Activated CD4-positive, alpha-beta T cell treated with anti-CD3 and anti-CD28 coated beads, Interleukin-2, amount 10 ng/mL, durations not matched to agents 24 days and 14 days (primary cell): ENCODE measurements at regions of chr17 and their contacts with region 1.

Region 1: DNA sequence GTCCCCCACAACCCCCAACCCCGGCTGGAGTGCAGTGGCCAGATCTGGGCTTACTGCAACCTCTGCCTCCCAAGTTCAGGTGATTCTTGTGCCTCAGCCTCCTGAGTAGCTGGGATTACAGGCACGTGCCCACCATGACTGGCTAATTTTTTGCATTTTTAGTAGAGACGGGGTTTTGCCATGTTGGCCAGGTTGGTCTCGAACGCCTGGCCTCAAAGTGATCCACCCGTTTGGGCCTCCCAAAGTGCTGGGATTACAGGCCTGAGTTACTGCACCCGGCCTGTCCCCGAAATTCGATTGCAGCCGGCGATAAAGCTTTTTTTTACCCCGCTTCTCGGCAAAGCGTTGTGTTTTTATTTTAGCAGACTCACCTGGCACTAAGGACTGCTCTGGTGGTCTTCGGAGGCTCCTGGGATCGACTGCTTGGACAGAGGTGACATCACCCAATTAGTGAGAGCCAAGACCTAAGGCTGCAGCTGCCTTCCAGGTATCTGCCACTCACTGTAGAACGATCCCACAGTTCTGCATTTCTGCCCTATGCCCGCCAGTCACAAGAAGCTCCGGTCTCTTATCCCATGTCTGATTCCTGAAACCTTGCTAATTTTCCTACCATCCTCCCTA is 82.2 kb upstream of the ARL4D start:
- DNase-seq: peak; percentile 79
- H3K4me3 Mint-ChIP-seq: peak overlapping the region; percentile 15
- H3K27ac Mint-ChIP-seq: no peak overlapping the region
- H3K4me1 Mint-ChIP-seq: peaks cover 20% of the 10 kb centered on the region
- H3K27me3 Mint-ChIP-seq: peaks cover 2% of the 10 kb centered on the region

Region 2: DNA sequence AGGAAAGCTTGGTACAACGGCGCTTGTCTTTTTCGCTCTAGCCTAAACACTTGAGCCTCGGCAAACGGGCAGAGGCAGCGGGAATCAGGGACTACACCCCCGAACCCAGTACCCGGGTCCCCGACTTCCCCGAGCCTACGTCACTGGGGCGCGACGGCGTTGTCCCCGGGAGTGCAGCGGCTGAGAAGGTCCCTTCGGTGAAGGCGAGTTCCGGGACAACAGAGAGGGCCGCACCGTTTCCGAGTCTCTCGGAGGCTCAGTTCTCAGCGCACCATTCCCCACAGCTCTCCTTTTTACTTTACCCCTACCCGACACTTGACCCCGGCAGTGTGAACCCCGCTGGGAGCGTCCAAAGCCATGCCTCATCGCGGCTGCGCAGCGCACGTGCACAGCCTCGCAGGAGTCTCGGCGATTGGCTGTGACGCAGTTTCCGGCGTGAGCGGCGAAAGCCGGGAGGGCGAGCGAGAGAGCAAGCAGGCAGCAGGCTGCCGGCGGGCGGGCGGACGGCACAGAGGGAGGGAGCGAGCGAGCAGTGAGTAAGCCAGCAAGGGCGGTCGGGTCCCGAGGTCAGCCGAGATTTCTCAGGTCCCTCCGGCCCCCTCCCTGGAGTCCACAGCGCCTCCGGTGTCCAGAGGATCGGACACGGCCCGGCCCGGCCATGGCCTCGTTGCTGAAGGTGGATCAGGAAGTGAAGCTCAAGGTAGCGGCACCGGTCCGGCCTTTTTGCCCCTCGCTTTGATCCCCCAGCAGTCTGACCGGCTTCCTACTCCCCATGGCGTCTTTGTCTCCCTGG is 483.5 kb before region 1 on chr17 and contains the start of gene PSME3:
- intact Hi-C with region 1: loop called (anchors 10 kb)
- DNase-seq: peak; percentile 98
- H3K4me3 Mint-ChIP-seq: peak within 1 kb of the TSS; percentile 98
- H3K27ac Mint-ChIP-seq: peak within 1 kb of the TSS; percentile 99
- H3K4me1 Mint-ChIP-seq: peaks cover 18% of the 10 kb centered on the region
- H3K27me3 Mint-ChIP-seq: peaks cover 8% of the 10 kb centered on the region
- total RNA-seq, gene PSME3: 232 and 250 TPM in 2 replicates

Region 3: DNA sequence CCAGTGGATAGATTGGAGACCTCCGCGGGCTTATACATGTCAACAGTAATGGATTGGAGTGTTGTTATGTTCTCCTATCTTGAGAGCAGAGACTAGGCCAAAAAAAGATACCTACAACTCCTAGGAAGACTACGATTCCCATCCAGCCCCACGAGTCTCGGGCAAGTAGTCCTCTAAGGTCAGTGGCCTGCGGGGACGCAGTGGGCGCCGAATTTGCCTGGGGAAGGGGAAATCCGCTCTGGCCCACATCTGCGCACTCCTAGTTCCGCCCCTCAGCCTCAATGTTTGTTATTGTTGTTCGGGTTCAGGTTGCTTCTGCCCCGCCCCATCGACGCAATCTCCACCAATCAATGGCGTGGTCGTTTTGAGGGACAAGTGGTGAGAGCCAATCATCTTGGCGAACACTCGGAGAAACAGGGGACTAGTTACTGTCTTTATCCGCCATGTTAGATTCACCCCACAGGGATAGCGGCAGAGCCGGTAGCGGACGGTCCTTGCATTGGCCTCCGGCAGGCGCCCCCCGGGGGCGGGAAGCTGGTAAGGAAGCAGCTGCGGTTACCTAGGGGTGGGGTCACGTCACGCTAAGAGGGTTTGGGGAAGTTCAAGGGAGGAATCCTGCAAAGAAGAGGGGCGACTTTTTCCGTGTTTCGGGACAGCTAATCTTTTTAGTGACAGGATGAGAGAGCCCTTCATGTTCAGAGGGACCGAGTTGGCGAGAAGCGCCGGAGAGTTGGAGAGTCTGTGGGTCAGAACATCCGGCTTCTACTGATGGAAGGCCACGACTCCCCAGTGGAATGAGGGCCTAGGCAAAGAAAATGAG is 145.7 kb before region 1 on chr17 and contains the start of gene NBR1:
- intact Hi-C with region 1: loop called (anchors 1 kb)
- DNase-seq: peak; percentile 99
- H3K4me3 Mint-ChIP-seq: no peak within 1 kb of the TSS
- H3K27ac Mint-ChIP-seq: no peak within 1 kb of the TSS
- H3K4me1 Mint-ChIP-seq: peaks cover 30% of the 10 kb centered on the region
- H3K27me3 Mint-ChIP-seq: no peaks in the 10 kb centered on the region
- total RNA-seq, gene NBR1: 51.2 and 53.5 TPM in 2 replicates